Gastrocnemius medialis (tissue), 4 donors: ENCODE measurements at regions of chr19 and their contacts with region 1.

Region 1: GRCh38 chr19:44770550-44771257 is 7.0 kb upstream of the CBLC start:
- DNase-seq: peak; percentile 82 to 91
- ATAC-seq: peak; percentile 96 to 100
- H3K4me3 ChIP-seq: no peak overlapping the region
- H3K27ac ChIP-seq: no peak overlapping the region
- H3K4me1 ChIP-seq: peaks cover 3 to 6% of the 10 kb centered on the region in 2 donors
- H3K27me3 ChIP-seq: no peaks in the 10 kb centered on the region
- CTCF ChIP-seq: peak; percentile 80 to 93 (median 87)
- POLR2A ChIP-seq: no peak

Region 2: DNA sequence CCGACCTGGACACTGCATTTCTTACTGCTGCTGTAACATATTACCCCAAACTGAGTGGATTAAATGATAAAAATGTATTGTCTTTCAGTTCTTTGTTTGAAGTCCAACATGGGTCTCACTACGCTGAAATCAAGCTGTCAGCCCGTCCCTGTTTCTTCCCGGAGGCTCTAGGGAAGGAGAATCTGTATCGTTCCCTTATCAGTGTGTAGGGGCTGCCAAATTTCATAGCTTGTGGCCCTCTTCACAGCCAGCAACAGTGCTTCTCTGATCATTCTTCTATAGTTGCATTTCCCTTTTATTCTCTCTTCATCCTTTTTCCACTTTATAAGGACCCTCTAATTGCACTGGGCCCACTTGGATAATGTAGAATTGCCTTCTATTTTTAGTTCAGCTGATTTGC is 619.2 kb before region 1 on chr19:
- in situ Hi-C with region 1: no loop called
- intact Hi-C with region 1: no loop called
- DNase-seq: no peak
- ATAC-seq: no peak
- H3K4me3 ChIP-seq: no peak overlapping the region
- H3K27ac ChIP-seq: no peak overlapping the region
- H3K4me1 ChIP-seq: no peaks in the 10 kb centered on the region
- H3K27me3 ChIP-seq: no peaks in the 10 kb centered on the region
- CTCF ChIP-seq: no peak
- POLR2A ChIP-seq: no peak

Region 3: DNA sequence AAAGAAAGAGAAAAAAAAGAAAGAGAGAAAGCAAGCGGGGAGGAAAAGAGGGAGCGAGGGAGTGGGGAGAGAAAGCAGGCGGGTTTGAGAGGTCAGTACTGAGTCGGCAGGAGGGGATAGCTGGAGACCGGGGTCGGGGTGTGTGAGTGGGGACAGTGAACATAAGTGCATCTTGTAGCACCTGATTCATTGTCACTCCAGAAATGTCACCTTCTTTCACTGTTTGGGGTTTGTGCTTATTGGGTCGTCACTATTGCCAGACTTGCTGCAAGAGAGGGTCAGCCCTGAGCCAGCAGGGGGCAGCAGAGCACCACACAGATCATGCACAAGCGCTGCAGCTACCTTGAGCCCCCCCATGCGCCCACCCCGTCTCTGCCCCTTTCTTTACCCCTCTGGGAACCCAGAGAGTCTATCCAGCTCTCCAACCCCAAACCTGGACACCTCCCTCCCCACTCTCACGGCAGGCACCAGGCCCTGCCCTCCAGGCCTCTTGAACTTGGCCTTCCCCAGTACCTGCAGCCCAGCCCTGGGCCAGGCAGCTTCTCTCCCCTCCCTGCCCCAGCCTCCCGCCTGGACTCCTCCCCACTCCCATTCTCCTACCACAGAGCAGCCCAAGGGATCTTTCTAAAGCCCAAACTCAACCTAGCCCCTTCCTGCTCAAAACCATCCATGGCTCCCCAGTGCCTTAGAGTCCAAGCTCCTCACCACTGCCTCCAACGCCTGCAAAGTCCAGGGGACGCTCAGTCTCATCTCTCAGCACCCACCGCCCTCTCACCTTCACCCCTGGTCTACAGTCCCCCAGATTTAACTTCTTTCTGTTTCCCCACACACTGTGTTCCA is 81.4 kb before region 1 on chr19:
- in situ Hi-C with region 1: no loop called
- intact Hi-C with region 1: loop called (anchors 1 kb)
- DNase-seq: peak in 1 of 2 donors; percentile 50
- ATAC-seq: peak in 1 of 2 donors; percentile 59
- H3K4me3 ChIP-seq: no peak overlapping the region
- H3K27ac ChIP-seq: no peak overlapping the region
- H3K4me1 ChIP-seq: peaks cover 0 to 5% of the 10 kb centered on the region in 2 donors
- H3K27me3 ChIP-seq: no peaks in the 10 kb centered on the region
- CTCF ChIP-seq: peak; percentile 78 to 92 (median 87)
- POLR2A ChIP-seq: no peak

Region 4: DNA sequence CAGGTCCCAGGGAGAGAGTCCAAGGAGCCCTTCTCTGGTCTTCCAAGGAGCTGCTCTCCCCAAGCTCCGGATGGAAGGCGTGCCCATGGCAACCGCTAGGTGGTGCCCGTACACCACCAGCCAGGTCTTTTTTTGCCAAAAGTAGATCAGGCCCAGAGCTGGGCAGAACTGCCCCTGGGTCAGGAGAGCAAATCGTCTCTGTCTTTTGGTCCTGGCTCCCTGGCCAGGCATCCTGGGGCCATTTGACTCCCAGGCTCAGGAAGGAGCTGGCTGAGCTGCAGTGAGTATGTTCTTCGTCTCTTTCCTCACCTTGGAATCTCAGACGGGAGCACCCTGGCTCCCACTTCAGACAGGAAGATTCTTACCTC is 46.8 kb before region 1 on chr19:
- in situ Hi-C with region 1: loop called (anchors 5 kb)
- intact Hi-C with region 1: loop called (anchors 1 kb)
- DNase-seq: peak; percentile 67 to 82
- ATAC-seq: peak; percentile 89 to 94
- H3K4me3 ChIP-seq: no peak overlapping the region
- H3K27ac ChIP-seq: peak overlapping the region; percentile 19 to 64 (median 38)
- H3K4me1 ChIP-seq: peaks cover 14 to 21% of the 10 kb centered on the region in 2 donors
- H3K27me3 ChIP-seq: no peaks in the 10 kb centered on the region
- CTCF ChIP-seq: peak; percentile 97 to 100 (median 99)
- POLR2A ChIP-seq: no peak